ENCODE measurements at regions of chrX and their contacts with region 1.

Region 1: GRCh38 chrX:111609206-111609605 is 71.8 kb upstream of the ALG13 start:
- DNase-seq: no peak
- H3K4me3 ChIP-seq: no peak overlapping the region
- H3K27ac ChIP-seq: no peak overlapping the region
- H3K4me1 ChIP-seq: no peaks in the 10 kb centered on the region
- H3K27me3 ChIP-seq: peaks cover 0 to 54% of the 10 kb centered on the region in 2 donors
- CTCF ChIP-seq: no peak
- POLR2A ChIP-seq: no peak

Region 2: GRCh38 chrX:110759785-110760184 is 849.4 kb before region 1 on chrX:
- intact Hi-C with region 1: loop called (anchors 5 kb)
- DNase-seq: no peak
- H3K4me3 ChIP-seq: no peak overlapping the region
- H3K27ac ChIP-seq: no peak overlapping the region
- H3K4me1 ChIP-seq: no peaks in the 10 kb centered on the region
- H3K27me3 ChIP-seq: peaks cover 0 to 22% of the 10 kb centered on the region in 2 donors
- CTCF ChIP-seq: no peak
- POLR2A ChIP-seq: no peak

Region 3: DNA sequence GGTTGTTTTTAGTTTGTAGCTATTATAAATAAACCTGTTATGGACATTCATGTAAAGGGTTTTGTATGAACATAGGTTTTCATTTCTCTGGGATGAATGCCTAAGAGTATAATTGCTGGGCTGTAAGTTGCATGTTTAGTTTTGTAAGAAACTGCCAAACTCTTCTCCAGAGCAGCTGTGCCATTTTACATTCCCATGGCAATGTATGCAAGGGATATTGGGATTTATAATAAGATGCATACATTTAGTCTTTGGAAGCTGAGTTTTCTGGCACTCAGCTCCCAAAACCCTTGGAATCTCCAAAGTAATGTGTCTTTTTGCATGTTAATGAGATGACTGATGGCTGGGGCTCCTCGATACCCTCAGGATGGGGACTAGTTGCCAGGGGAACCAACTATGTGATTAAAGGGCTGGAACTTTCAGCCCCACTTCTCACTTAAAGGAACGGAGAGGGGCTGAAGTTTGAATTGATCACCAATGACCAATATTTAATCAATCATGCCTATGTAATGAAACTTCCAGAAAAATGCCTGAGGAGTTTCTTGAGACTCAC is 53.7 kb before region 1 on chrX:
- intact Hi-C with region 1: no loop called
- DNase-seq: no peak
- H3K4me3 ChIP-seq: no peak overlapping the region
- H3K27ac ChIP-seq: no peak overlapping the region
- H3K4me1 ChIP-seq: no peaks in the 10 kb centered on the region
- H3K27me3 ChIP-seq: peaks cover 0 to 24% of the 10 kb centered on the region in 2 donors
- CTCF ChIP-seq: no peak
- POLR2A ChIP-seq: no peak

Region 4: GRCh38 chrX:111585337-111585736 is 23.9 kb before region 1 on chrX:
- intact Hi-C with region 1: no loop called
- DNase-seq: no peak
- H3K4me3 ChIP-seq: no peak overlapping the region
- H3K27ac ChIP-seq: no peak overlapping the region
- H3K4me1 ChIP-seq: no peaks in the 10 kb centered on the region
- H3K27me3 ChIP-seq: peaks cover 0 to 29% of the 10 kb centered on the region in 2 donors
- CTCF ChIP-seq: no peak
- POLR2A ChIP-seq: no peak